PC-9 (cell line): ENCODE measurements at regions of chr6 and their contacts with region 1.

Region 1: GRCh38 chr6:106692112-106692818 is 62.9 kb downstream of the QRSL1 start:
- DNase-seq: peak; percentile 44 to 50
- H3K4me3 ChIP-seq: no peak overlapping the region
- H3K27ac ChIP-seq: peak overlapping the region; percentile 47
- H3K4me1 ChIP-seq: peaks cover 19% of the 10 kb centered on the region
- H3K27me3 ChIP-seq: no peaks in the 10 kb centered on the region
- CTCF ChIP-seq: no peak

Region 2: DNA sequence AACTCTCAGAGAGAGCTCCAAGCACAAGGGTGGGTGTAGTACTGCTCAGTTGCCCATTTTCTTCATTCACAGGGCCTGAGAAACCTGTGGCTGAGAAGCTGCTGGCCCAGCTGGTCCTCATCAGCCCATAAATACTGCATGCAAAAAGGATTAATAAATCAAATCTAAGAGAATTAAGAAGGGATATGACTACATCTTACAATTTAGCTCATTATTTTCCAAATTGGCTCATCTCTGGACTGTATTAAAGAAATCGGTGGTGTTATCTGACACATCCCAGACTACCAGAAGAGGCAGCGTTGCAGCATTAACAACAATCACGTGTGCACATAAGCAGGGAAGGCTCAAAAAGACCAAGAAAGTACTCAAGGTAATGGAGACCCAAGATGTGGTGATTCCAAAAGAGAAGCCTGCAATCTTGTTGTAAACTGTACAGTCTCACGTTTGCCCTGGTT is 191.6 kb after region 1 on chr6:
- CTCF ChIA-PET with region 1: no interaction called
- POLR2A ChIA-PET with region 1: interaction called, 16 read pairs
- intact Hi-C with region 1: no loop called
- DNase-seq: no peak
- H3K4me3 ChIP-seq: no peak overlapping the region
- H3K27ac ChIP-seq: no peak overlapping the region
- H3K4me1 ChIP-seq: peaks cover 39% of the 10 kb centered on the region
- H3K27me3 ChIP-seq: no peaks in the 10 kb centered on the region
- CTCF ChIP-seq: peak; percentile 44